ENCODE measurements at regions of chr5 and their contacts with region 1.

Region 1: DNA sequence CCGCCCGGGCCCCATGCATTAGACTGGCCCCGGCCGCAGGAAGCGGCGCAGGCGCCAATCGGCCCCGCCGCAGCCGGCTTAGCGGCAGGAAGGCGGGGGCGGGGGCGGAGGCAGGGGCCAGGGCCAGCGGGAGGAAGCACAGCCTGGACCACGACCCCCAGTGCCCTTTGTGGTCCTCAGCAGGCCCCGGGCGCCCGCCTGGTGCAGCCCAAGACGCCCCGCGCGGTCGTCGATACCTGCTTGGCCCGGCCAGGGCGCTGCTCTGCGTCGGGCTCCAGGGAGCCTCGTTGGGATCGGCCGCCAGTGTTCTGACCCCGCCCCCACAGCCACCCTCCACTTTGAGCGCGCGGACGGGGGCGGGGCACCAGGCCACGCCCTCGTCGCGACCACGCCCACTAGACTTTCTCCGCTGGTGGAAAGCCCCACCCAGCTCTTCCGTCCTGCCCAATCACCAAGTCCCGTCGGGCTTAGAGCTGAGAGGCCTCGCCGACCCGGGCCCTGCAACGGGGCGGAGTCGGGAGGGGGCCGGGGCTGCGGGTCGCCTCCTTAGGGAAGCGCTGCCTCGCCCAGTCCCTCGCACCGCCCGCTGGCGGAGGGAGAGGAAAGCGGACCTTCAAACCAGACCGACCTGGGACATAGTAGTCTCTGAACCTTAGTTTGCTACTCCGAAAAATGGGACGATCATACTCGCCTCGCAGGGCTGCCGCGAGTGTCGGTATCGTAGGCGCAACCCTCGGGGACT is at the start of gene PDLIM7:
- DNase-seq: peak; percentile 95
- H3K4me3 ChIP-seq: peak within 1 kb of the TSS; percentile 73 to 80 (median 74)
- H3K27ac ChIP-seq: peak within 1 kb of the TSS; percentile 37
- H3K4me1 ChIP-seq: peaks cover 61% of the 10 kb centered on the region
- H3K27me3 ChIP-seq: no peaks in the 10 kb centered on the region
- CTCF ChIP-seq: peak in 1 of 2 donors; percentile 14
- total RNA-seq, gene PDLIM7: 235 to 259 TPM

Region 2: DNA sequence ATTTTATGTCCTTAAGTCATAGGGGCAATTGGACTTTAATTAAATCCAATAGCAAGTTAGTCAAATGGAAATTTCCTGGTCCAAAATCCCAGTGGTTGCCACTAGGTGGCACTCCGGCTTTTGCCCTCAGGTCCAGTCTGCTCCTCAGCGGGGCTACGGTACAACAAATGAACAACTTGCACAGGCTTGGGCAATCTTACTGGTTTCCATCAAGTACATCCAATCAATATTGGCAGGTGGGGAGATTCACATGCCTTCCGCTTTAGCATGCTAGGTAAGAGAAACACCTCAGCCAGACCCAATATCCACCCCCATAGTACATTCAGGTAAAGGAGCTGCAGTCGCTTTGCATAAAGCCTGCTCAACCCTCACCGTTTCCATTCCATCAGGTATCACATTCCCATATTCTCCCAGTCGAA is 179.5 kb before region 1 on chr5:
- CTCF ChIA-PET with region 1: no interaction called
- dilution Hi-C with region 1: no loop called
- in situ Hi-C with region 1: no loop called
- intact Hi-C with region 1: loop called (anchors 2 kb)
- DNase-seq: peak; percentile 61
- H3K4me3 ChIP-seq: no peak overlapping the region
- H3K27ac ChIP-seq: no peak overlapping the region
- H3K4me1 ChIP-seq: peaks cover 2% of the 10 kb centered on the region
- H3K27me3 ChIP-seq: no peaks in the 10 kb centered on the region
- CTCF ChIP-seq: peak; percentile 88

Region 3: GRCh38 chr5:177431317-177432142 is 65.9 kb before region 1 on chr5:
- CTCF ChIA-PET with region 1: no interaction called
- dilution Hi-C with region 1: no loop called
- in situ Hi-C with region 1: no loop called
- intact Hi-C with region 1: no loop called
- DNase-seq: no peak
- H3K4me3 ChIP-seq: no peak overlapping the region
- H3K27ac ChIP-seq: no peak overlapping the region
- H3K4me1 ChIP-seq: peaks cover 26% of the 10 kb centered on the region
- H3K27me3 ChIP-seq: no peaks in the 10 kb centered on the region
- CTCF ChIP-seq: no peak

Region 4: GRCh38 chr5:177537389-177538361 is 40.2 kb after region 1 on chr5:
- CTCF ChIA-PET with region 1: no interaction called
- dilution Hi-C with region 1: no loop called
- in situ Hi-C with region 1: no loop called
- intact Hi-C with region 1: loop called (anchors 2 kb)
- DNase-seq: peak; percentile 67
- H3K4me3 ChIP-seq: no peak overlapping the region
- H3K27ac ChIP-seq: peak overlapping the region; percentile 62
- H3K4me1 ChIP-seq: peaks cover 43% of the 10 kb centered on the region
- H3K27me3 ChIP-seq: no peaks in the 10 kb centered on the region
- CTCF ChIP-seq: no peak

Measured in mammary epithelial cell (primary cell).